ENCODE measurements at regions of chr12 and their contacts with region 1.

Region 1: GRCh38 chr12:3275171-3276041 is 198.2 kb downstream of the TSPAN9 start:
- DNase-seq: peak; percentile 56

Region 2: DNA sequence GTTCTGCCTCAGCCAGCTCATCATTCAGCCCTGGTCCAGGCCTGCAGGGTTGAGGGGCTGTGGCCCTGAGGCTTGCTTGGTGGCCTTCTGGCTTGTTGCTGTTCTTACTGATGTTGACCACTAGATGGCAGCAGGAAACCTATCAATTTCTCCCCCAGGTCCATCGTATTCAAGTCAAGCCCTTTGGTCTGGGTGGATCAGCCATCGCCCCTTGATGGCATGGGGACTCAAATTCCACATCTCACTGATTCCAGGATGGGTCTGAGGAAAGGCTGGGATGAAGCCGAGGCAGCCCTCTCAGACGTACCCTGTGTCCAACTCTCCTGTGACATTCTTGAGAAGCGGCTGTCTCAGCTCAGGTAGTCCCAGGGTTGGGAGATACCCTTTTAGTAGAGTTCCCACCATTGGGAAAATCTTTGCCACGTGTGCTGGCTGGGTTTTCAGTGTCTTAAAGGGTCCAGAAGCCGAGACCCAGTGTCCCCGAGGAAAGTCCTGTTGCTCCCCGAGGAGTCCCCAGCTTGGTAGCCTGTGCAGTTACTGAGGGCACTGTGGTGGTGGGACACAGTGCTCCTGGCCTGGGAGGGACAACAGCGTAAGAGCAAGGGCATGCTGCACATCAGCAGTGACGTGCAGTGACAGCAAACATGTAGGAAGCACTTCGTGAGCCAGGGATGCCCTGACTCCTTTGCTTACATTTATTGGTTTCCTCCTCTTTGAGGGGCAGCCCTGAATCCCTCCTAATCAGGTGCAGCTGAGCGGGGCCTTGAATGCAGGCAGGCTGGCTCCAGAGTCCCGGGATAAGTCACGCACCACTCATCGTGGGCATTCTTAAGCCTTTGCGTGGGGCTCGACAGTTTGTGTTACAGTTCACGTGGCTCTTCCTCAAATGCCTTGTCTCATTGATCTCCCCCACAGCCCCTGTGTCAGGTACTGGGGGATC is 139.6 kb before region 1 on chr12:
- in situ Hi-C with region 1: loop called (anchors 10 kb)
- DNase-seq: peak; percentile 81

Measured in KBM-7 (cell line).